CD8-positive, alpha-beta memory T cell (primary cell): ENCODE measurements at regions of chr11 and their contacts with region 1.

Region 1: GRCh38 chr11:1309498-1310317 is at the start of gene TOLLIP:
- DNase-seq: peak; percentile 98 to 100 (median 98)
- H3K4me3 ChIP-seq: peak within 1 kb of the TSS; percentile 83
- H3K4me3 Mint-ChIP-seq: peak within 1 kb of the TSS; percentile 85 to 95 (median 90)
- H3K27ac ChIP-seq: peak within 1 kb of the TSS; percentile 84
- H3K27ac Mint-ChIP-seq: peak within 1 kb of the TSS; percentile 94 to 99 (median 96)
- H3K4me1 ChIP-seq: peaks cover 35% of the 10 kb centered on the region
- H3K4me1 Mint-ChIP-seq: peaks cover 34 to 53% (median 42%) of the 10 kb centered on the region in 3 donors
- H3K27me3 ChIP-seq: no peaks in the 10 kb centered on the region
- H3K27me3 Mint-ChIP-seq: no peaks in the 10 kb centered on the region
- total RNA-seq, gene TOLLIP: 36.3 to 41.8 TPM

Region 2: DNA sequence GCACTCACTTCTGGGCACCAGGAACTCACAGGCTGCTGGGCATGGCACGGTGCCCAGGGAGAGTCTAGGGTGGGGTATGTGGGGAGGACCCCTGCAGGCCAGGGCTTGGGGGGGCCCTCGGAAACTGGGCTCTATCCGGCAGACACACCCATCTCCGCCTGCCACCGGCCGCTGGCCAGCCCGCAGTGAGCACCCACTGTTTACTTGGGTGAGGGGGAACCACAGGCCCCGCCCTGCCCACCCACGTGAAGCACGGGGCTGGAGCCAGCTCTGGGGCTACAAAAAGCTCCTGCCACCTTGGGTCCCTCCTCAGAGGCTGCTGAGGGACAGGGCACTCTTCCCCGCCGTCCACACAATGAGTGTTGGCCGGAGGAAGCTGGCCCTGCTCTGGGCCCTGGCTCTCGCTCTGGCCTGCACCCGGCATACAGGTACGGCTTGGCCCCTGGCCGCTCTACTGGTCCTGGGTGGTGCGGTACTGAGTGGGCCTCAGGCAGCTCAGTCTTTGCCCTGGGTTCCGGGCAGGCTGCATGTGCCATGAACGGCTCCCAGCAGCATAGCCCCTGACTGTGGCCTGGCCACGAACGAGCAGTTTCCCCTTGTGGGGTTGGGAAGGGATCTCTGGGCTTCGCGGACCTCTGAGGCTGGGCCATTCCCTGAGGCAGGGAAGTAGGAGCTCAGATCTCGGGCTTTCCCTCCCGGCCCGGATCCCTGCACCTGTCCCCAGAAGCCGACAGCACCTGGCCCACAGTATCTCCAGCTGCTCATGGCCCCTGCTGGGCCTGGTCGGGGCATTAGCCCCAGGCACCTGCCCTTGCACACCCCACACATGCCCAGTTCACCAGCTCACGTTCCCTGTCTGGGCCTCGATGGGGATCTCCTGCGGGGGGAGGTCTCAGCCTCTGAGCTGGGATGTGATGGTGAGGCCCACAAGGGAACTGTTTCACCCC is 151.8 kb before region 1 on chr11 and contains the start of gene MUC5AC:
- CTCF ChIA-PET with region 1: no interaction called
- POLR2A ChIA-PET with region 1: no interaction called
- DNase-seq: no peak
- H3K4me3 ChIP-seq: no peak within 1 kb of the TSS
- H3K4me3 Mint-ChIP-seq: no peak within 1 kb of the TSS
- H3K27ac ChIP-seq: no peak within 1 kb of the TSS
- H3K27ac Mint-ChIP-seq: no peak within 1 kb of the TSS
- H3K4me1 ChIP-seq: no peaks in the 10 kb centered on the region
- H3K4me1 Mint-ChIP-seq: no peaks in the 10 kb centered on the region
- H3K27me3 ChIP-seq: no peaks in the 10 kb centered on the region
- H3K27me3 Mint-ChIP-seq: peaks cover 0 to 2% of the 10 kb centered on the region in 2 donors
- total RNA-seq, gene MUC5AC: not detected

Region 3: GRCh38 chr11:1233331-1233715 is 76.4 kb before region 1 on chr11:
- CTCF ChIA-PET with region 1: no interaction called
- POLR2A ChIA-PET with region 1: no interaction called
- DNase-seq: no peak
- H3K4me3 ChIP-seq: no peak overlapping the region
- H3K4me3 Mint-ChIP-seq: no peak overlapping the region
- H3K27ac ChIP-seq: no peak overlapping the region
- H3K27ac Mint-ChIP-seq: no peak overlapping the region
- H3K4me1 ChIP-seq: no peaks in the 10 kb centered on the region
- H3K4me1 Mint-ChIP-seq: no peaks in the 10 kb centered on the region
- H3K27me3 ChIP-seq: no peaks in the 10 kb centered on the region
- H3K27me3 Mint-ChIP-seq: no peaks in the 10 kb centered on the region

Region 4: DNA sequence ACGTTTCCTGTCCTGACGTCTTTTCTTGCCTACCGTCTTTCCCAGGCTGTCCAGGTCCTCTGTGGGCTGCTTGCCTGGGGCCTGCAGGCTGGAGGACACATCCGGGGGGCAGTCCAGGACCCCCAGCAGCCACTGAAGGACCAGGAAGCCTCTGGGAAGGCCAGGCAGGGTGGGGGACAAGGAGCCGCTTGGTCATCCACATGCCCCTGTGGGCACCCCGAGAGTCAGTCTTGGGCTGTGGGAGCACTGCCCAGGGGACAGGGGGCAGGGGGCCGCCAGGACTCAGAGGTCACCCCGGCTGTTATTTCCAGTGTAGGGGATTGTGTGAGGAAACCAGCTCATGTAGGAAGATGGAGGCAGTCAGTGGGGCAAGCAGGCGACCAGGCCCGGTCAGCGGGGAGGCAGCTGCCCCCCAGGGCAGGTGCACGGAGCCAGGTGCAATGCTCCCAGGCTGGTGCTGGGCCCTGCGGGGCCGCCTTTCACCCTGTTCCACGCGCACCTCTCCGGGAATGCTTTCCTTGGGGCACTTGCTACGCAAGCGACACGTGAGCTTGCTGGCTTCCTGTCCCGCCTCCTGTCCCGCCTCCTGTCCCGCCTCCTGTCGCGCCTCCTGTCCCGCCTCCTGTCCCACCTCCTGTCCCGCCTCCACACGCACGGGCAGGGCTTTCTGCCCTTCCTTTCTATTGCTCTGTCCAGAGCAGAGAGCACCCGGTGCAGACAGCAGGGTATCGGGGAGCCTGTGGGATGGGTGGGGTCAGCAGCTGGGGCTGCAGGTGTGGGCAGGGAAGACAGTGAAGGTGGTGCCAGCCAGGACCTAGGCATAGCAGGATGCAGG is 47.3 kb before region 1 on chr11:
- CTCF ChIA-PET with region 1: interaction called, 4 read pairs
- POLR2A ChIA-PET with region 1: interaction called, 17 read pairs
- DNase-seq: peak; percentile 83 to 89 (median 85)
- H3K4me3 ChIP-seq: peak overlapping the region; percentile 85
- H3K4me3 Mint-ChIP-seq: peak overlapping the region; percentile 70 to 87 (median 84)
- H3K27ac ChIP-seq: peak overlapping the region; percentile 75
- H3K27ac Mint-ChIP-seq: peak overlapping the region; percentile 72 to 95 (median 90)
- H3K4me1 ChIP-seq: peaks cover 15% of the 10 kb centered on the region
- H3K4me1 Mint-ChIP-seq: peaks cover 11 to 25% (median 13%) of the 10 kb centered on the region in 3 donors
- H3K27me3 ChIP-seq: no peaks in the 10 kb centered on the region
- H3K27me3 Mint-ChIP-seq: peaks cover 0 to 4% of the 10 kb centered on the region in 2 donors

Region 5: DNA sequence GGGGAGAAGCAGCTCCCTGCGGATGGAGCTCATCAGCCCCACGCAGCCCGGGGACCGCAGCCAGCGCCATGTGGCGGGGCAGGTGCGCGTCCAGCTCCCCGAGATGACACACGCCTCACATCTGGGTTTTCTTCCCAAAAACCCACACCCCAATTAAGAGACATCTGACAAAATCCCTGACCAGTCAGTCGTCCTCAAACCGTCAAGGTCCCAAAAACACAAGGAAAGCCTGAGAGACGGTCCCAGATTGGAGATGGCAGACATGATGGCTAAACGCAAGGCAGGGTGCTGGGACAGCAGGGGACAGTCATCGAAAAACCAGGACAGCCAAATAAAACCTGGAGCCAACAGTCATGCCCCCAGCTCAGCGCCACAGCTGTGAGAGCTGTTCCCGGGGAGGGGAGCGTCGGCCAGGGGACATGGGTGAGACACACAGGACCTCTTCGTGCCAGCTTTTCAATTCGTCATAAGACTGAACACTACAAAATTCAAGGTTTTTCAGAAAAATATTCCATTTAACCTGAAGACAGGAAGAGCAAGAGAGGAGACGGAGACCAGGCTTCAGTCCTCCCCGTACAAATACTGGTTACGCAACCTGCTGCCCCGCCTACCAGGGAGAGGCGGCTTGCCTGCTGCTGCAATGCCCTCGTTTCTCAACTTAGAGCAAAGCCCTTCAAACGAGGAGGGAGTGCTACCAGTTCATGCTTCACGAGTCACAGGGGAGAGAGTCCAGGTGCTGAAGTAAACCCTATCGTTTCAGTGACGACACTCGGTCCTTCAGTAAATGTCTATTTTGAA is 10.8 kb before region 1 on chr11:
- CTCF ChIA-PET with region 1: no interaction called
- POLR2A ChIA-PET with region 1: no interaction called
- DNase-seq: no peak
- H3K4me3 ChIP-seq: no peak overlapping the region
- H3K4me3 Mint-ChIP-seq: no peak overlapping the region
- H3K27ac ChIP-seq: no peak overlapping the region
- H3K27ac Mint-ChIP-seq: no peak overlapping the region
- H3K4me1 ChIP-seq: no peaks in the 10 kb centered on the region
- H3K4me1 Mint-ChIP-seq: peaks cover 11 to 40% (median 13%) of the 10 kb centered on the region in 3 donors
- H3K27me3 ChIP-seq: no peaks in the 10 kb centered on the region
- H3K27me3 Mint-ChIP-seq: no peaks in the 10 kb centered on the region

Region 6: GRCh38 chr11:1358286-1358685 is 48.6 kb after region 1 on chr11:
- CTCF ChIA-PET with region 1: no interaction called
- POLR2A ChIA-PET with region 1: no interaction called
- DNase-seq: peak in 1 of 5 donors; percentile 27
- H3K4me3 ChIP-seq: no peak overlapping the region
- H3K4me3 Mint-ChIP-seq: no peak overlapping the region
- H3K27ac ChIP-seq: no peak overlapping the region
- H3K27ac Mint-ChIP-seq: no peak overlapping the region
- H3K4me1 ChIP-seq: no peaks in the 10 kb centered on the region
- H3K4me1 Mint-ChIP-seq: no peaks in the 10 kb centered on the region
- H3K27me3 ChIP-seq: no peaks in the 10 kb centered on the region
- H3K27me3 Mint-ChIP-seq: peaks cover 18 to 20% of the 10 kb centered on the region in 2 donors